Ovary (tissue), 10 donors: ENCODE measurements at regions of chr20 and their contacts with region 1.

Region 1: DNA sequence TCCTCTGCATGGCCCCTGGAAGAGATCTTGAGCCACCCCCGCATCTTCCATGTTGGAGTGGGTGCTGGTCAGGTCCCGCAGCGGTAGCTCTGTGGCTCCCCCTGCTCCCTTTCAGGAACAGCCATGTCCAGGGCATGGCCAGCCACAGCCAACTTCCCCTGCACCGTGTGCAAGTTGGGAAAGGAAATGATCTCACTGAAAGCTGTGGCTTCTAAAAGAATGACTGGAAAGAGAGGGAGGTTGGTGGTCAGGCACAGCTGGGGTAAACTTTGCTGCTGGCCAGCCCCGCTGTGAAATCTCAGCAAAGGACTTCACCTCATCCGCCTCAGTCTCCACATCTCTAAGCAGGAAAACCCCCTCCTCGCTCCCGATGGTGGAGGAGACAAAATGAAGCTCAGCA is 153.6 kb upstream of the CST7 start:
- DNase-seq: no peak
- H3K4me3 ChIP-seq: no peak overlapping the region
- H3K27ac ChIP-seq: no peak overlapping the region
- H3K4me1 ChIP-seq: no peaks in the 10 kb centered on the region
- H3K27me3 ChIP-seq: no peaks in the 10 kb centered on the region
- CTCF ChIP-seq: no peak
- EP300 ChIP-seq: no peak
- POLR2A ChIP-seq: no peak

Region 2: DNA sequence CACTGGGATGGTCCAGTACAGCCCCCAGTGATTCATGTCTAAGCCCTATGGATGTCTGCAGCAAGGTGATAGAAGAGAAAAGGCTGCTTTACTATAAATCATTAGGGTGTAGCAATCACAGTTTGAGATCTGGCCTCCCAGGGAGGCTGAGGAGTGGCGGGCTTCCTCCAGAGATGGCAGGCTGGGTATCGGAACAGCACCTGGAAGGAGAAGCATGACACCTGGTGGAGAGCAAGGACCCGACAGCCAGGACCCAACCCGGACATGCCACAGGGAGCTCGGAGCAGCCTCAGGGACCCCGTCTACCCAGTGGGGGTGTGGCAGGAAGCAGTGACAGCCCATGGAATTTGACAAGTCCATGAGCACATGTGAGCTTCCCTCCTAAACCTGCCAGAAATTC is 1594.5 kb before region 1 on chr20:
- intact Hi-C with region 1: no loop called
- DNase-seq: no peak
- H3K4me3 ChIP-seq: no peak overlapping the region
- H3K27ac ChIP-seq: no peak overlapping the region
- H3K4me1 ChIP-seq: no peaks in the 10 kb centered on the region
- H3K27me3 ChIP-seq: no peaks in the 10 kb centered on the region
- CTCF ChIP-seq: no peak
- EP300 ChIP-seq: no peak
- POLR2A ChIP-seq: no peak

Region 3: DNA sequence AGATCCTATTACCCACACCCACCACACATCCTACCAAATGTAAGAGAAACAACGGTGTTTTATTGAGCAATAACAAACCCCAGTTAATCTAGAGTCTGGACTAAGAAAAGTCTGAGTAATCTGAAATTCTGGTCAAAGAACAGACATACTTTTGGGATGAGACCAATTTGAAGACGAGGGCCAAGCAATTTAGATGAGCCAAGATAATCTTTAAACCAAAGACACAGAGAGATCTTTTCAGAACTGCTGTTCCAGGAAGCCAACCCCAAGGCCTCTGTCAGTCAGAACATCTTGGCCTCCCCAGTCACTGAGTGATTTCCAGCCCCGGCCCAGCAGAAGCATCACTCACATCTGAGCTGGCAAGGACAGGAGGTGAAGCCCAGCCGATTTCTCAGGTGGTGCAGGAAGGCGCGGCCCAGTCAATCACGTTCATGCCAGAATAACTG is 444.5 kb before region 1 on chr20:
- intact Hi-C with region 1: no loop called
- DNase-seq: no peak
- H3K4me3 ChIP-seq: no peak overlapping the region
- H3K27ac ChIP-seq: no peak overlapping the region
- H3K4me1 ChIP-seq: peaks cover 4% of the 10 kb centered on the region
- H3K27me3 ChIP-seq: no peaks in the 10 kb centered on the region
- CTCF ChIP-seq: no peak
- EP300 ChIP-seq: no peak
- POLR2A ChIP-seq: no peak

Region 4: DNA sequence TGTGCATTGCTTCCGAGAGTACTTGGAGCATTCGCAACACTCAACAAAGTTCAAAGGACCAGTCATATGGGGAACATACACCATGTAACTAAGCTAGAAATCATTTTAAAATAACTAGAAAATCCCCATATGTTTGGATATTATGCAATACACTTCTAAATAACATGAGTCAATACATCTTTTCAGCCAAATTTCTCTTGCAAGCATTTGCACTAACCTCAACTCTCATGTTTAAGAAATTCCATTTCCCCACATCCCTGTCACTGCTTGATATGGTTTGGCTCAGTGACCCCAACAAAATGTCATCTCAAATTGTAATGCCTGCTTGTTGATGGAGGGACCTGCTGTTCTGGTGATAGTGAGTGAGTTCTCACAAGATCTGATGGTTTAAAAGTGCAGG is 67.9 kb after region 1 on chr20:
- intact Hi-C with region 1: no loop called
- DNase-seq: no peak
- H3K4me3 ChIP-seq: no peak overlapping the region
- H3K27ac ChIP-seq: no peak overlapping the region
- H3K4me1 ChIP-seq: no peaks in the 10 kb centered on the region
- H3K27me3 ChIP-seq: no peaks in the 10 kb centered on the region
- CTCF ChIP-seq: no peak
- EP300 ChIP-seq: no peak
- POLR2A ChIP-seq: no peak

Region 5: GRCh38 chr20:24891546-24892393 is 96.3 kb after region 1 on chr20:
- intact Hi-C with region 1: loop called in 1 of 4 experiments (anchors 10 kb)
- DNase-seq: no peak
- H3K4me3 ChIP-seq: no peak overlapping the region
- H3K27ac ChIP-seq: no peak overlapping the region
- H3K4me1 ChIP-seq: no peaks in the 10 kb centered on the region
- H3K27me3 ChIP-seq: no peaks in the 10 kb centered on the region
- CTCF ChIP-seq: no peak
- EP300 ChIP-seq: no peak
- POLR2A ChIP-seq: no peak

Region 6: DNA sequence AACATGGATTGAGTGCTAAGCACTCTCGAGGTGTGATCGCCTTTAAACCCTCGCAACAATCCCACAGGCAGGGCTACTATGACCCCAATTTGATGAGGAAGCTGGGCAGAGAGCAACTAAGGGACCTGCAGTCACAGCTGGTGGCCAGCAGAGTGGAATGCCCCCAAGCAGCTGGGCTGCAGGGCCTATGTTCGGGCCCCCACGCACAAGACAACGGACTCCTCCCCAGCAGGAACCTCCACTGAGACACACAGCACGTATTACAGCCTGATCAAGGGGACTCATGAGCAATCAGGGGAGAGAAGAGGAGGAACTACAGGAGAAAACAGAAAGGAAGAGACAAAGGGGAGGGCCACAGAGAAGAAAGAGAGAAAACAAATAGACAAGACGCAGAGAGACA is 175.3 kb after region 1 on chr20:
- intact Hi-C with region 1: loop called in 1 of 4 experiments (anchors 5 kb)
- DNase-seq: no peak
- H3K4me3 ChIP-seq: no peak overlapping the region
- H3K27ac ChIP-seq: no peak overlapping the region
- H3K4me1 ChIP-seq: no peaks in the 10 kb centered on the region
- H3K27me3 ChIP-seq: no peaks in the 10 kb centered on the region
- CTCF ChIP-seq: no peak
- EP300 ChIP-seq: no peak
- POLR2A ChIP-seq: no peak